Heart right ventricle (tissue), 16 donors: ENCODE measurements at regions of chr18 and their contacts with region 1.

Region 1: GRCh38 chr18:32261003-32261402 is 71.2 kb downstream of the MEP1B start:
- DNase-seq: no peak
- ATAC-seq: no peak
- H3K4me3 ChIP-seq: no peak overlapping the region
- H3K27ac ChIP-seq: no peak overlapping the region
- H3K4me1 ChIP-seq: no peaks in the 10 kb centered on the region
- H3K27me3 ChIP-seq: no peaks in the 10 kb centered on the region
- CTCF ChIP-seq: no peak

Region 2: DNA sequence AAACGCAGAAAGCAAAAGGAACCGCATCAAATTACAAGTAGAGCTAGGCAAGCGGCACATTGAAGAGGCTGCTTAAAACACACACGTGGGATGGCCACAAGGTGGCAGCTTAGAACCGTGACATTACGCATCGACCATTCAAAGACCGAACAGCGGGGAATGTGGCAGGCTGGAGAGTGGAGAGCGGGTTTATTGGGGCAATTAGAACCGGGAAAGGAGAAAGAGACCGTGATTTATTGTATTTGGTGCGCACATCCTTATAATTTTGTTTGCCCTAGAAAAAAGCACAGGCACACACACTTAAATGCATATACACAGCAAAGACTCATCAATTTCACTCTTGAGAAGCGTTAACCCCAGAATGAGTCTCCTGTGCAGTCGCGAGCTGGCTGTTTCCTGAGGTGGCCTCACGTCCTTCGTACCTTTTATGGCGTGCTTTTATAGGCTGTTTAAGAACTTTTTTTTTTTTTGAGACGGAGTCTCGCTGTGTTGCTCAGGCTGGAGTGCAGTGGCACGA is 102.8 kb before region 1 on chr18:
- intact Hi-C with region 1: loop called in 5 of 10 experiments (anchors 5 to 10 kb)
- DNase-seq: peak; percentile 63 to 77
- ATAC-seq: peak; percentile 90 to 98 (median 95)
- H3K4me3 ChIP-seq: peak overlapping the region in 7 of 10 donors; percentile 13 to 35 (median 25)
- H3K27ac ChIP-seq: no peak overlapping the region
- H3K4me1 ChIP-seq: peaks cover 0 to 12% (median 0%) of the 10 kb centered on the region in 9 donors
- H3K27me3 ChIP-seq: peaks cover 0 to 9% (median 0%) of the 10 kb centered on the region in 7 donors
- CTCF ChIP-seq: peak; percentile 68 to 90 (median 82)

Region 3: GRCh38 chr18:32167975-32168730 is 92.8 kb before region 1 on chr18:
- intact Hi-C with region 1: loop called in 1 of 10 experiments (anchors 10 kb)
- DNase-seq: no peak
- ATAC-seq: no peak
- H3K4me3 ChIP-seq: no peak overlapping the region
- H3K27ac ChIP-seq: no peak overlapping the region
- H3K4me1 ChIP-seq: no peaks in the 10 kb centered on the region
- H3K27me3 ChIP-seq: no peaks in the 10 kb centered on the region
- CTCF ChIP-seq: no peak